K562 (cell line): ENCODE measurements at regions of chr17 and their contacts with region 1.

Region 1: DNA sequence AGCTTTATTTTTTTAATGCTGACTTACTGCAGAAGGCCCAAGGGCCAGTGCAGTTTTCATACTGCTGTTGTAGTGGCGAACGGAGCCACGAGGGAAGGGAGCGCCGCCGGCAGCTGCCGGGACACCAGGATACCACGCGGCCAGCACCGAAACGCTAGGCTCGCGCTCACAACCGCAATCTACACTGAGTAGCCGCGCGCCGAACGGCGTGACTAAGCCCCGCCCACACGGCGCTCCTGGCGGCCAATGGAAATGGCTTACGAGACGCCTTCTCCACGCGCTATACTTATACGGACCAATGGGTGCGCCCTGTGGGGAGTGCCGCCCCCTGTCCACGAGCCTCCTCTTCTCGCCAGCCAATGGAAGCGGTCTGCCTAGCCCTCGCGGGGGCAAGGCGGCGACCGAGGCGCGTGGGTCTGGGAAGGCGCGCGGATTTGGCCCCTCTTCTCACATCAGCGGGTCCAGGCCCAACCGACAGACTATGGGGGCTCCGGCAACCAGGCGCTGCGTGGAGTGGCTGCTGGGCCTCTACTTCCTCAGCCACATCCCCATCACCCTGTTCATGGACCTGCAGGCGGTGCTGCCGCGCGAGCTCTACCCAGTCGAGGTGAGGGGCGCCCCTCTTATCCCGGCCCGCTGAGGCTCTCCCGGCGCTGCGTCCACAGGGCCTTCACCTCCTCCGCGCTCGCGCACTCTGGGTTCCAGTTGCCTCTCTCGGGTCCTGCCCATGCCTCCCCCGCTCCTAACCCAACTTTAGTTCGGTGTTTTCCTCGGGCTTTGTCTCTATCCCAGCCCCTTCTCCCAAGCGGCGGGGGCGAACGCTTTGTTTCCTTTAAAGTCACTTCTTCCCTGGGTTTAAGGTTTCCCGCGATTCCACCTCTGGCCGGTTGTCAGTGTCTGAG is at the start of gene TMEM97:
- DNase-seq: peak; percentile 96 to 99 (median 97)
- ATAC-seq: peak; percentile 96
- H3K4me3 ChIP-seq: peak within 1 kb of the TSS; percentile 56
- H3K27ac ChIP-seq: peak within 1 kb of the TSS; percentile 81
- H3K4me1 ChIP-seq: peaks cover 32 to 43% of the 10 kb centered on the region in 2 experiments
- H3K27me3 ChIP-seq: no peaks in the 10 kb centered on the region
- CTCF ChIP-seq: no peak; a peak in 1 of 6 replicates
- EP300 ChIP-seq: no peak
- POLR2A ChIP-seq: peak; percentile 93
- RAD21 ChIP-seq: no peak
- polyA plus RNA-seq, gene TMEM97: 76.0 to 95.3 TPM

Region 2: GRCh38 chr17:28306954-28307401 is 12.0 kb before region 1 on chr17:
- CTCF ChIA-PET with region 1: no interaction called
- POLR2A ChIA-PET with region 1: interaction called, 13 read pairs
- in situ Hi-C with region 1: no loop called
- intact Hi-C with region 1: no loop called
- DNase-seq: no peak
- ATAC-seq: no peak
- H3K4me3 ChIP-seq: no peak overlapping the region
- H3K27ac ChIP-seq: no peak overlapping the region
- H3K4me1 ChIP-seq: peaks cover 0 to 6% of the 10 kb centered on the region in 2 experiments; a peak in 1 of 5 replicates
- H3K27me3 ChIP-seq: no peaks in the 10 kb centered on the region
- CTCF ChIP-seq: no peak
- EP300 ChIP-seq: no peak
- POLR2A ChIP-seq: no peak
- RAD21 ChIP-seq: no peak

Region 3: GRCh38 chr17:28335201-28335955 is 16.4 kb after region 1 on chr17 and contains the starts of genes IFT20 and TNFAIP1:
- CTCF ChIA-PET with region 1: interaction called, 3 read pairs
- POLR2A ChIA-PET with region 1: interaction called, 62 read pairs
- in situ Hi-C with region 1: no loop called
- intact Hi-C with region 1: loop called (anchors 2 kb)
- DNase-seq: peak; percentile 91 to 99 (median 94)
- ATAC-seq: peak; percentile 98
- H3K4me3 ChIP-seq: peak within 1 kb of the TSS; percentile 95
- H3K27ac ChIP-seq: peak within 1 kb of the TSS; percentile 65
- H3K4me1 ChIP-seq: peaks cover 19 to 20% of the 10 kb centered on the region in 2 experiments; a peak in 4 of 5 replicates
- H3K27me3 ChIP-seq: no peaks in the 10 kb centered on the region
- CTCF ChIP-seq: no peak
- EP300 ChIP-seq: peak; percentile 32; the same call in 1 of the 2 replicates
- POLR2A ChIP-seq: peak; percentile 79
- RAD21 ChIP-seq: peak in 1 of 2 experiments; percentile 16; a peak in 1 of 4 replicates
- polyA plus RNA-seq, gene IFT20: 11.2 to 17.7 TPM
- polyA plus RNA-seq, gene TNFAIP1: 2.1 to 2.9 TPM